Aorta (tissue), 5 donors: ENCODE measurements at regions of chr6 and their contacts with region 1.

Region 1: DNA sequence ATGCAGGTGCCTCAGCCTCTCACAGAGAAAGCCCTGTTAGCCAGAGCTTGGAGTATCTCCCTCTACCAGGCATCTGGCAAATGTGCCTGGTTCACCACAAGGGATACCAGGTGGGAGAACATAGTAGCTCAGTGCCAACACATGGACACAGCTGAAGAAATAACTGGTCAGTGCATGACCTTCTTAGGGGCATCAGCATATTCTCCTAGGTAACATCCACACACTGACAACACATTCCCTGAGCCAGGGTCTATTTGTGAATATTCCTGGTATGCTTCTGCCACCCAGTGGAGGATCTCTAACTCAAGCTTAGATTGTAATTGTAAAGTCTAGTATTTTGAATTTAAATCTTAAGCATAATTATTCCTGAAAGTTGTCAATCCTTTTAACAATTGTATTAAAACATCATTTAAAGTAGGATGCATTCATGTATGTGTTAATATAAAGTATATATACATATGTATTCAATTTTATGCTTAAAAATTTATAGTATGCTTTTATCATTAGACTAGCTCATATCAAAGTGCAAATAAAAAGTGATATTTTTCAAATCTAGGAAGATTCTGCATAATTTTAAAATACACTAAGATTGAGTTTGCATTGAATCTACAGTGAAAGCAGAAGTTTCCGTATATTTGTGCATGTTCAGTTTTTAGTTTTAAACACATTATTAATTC is 45.3 kb upstream of the COL21A1 start:
- DNase-seq: no peak
- ATAC-seq: peak; percentile 75
- H3K4me3 ChIP-seq: no peak overlapping the region
- H3K27ac ChIP-seq: no peak overlapping the region
- H3K4me1 ChIP-seq: no peaks in the 10 kb centered on the region
- H3K27me3 ChIP-seq: no peaks in the 10 kb centered on the region

Region 2: DNA sequence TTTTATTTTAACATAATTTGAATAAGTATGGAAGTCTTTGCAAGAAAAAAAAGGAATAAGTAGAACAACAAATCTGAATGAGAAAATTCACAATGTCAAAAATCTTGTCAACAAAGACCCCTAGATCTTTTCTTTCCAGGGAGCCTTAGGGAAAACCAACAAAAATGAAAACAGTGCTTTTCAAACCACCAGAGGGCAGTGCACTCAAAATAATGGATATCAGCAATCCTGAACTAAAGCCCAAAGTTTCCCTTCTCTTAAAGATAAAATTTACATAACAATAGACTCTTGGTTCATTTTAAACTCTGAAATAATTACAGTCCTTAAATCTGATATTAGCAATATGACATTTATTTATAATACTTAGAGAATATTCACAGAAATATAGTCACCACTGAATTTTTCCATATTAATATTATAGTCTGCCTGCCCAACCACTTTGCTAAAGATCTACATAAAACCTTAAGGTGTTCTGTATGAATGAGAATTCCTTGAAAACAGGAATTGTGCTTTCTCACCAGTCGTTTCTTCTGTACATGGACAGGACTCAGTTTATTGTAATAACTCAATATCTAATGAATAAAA is 311.9 kb before region 1 on chr6:
- intact Hi-C with region 1: loop called (anchors 2 kb)
- DNase-seq: no peak
- ATAC-seq: peak; percentile 56
- H3K4me3 ChIP-seq: no peak overlapping the region
- H3K27ac ChIP-seq: no peak overlapping the region
- H3K4me1 ChIP-seq: no peaks in the 10 kb centered on the region
- H3K27me3 ChIP-seq: no peaks in the 10 kb centered on the region

Region 3: GRCh38 chr6:56025795-56026194 is 266.8 kb before region 1 on chr6:
- intact Hi-C with region 1: loop called in 1 of 2 experiments (anchors 5 kb)
- DNase-seq: no peak
- ATAC-seq: no peak
- H3K4me3 ChIP-seq: no peak overlapping the region
- H3K27ac ChIP-seq: no peak overlapping the region
- H3K4me1 ChIP-seq: peaks cover 0 to 2% of the 10 kb centered on the region in 2 donors
- H3K27me3 ChIP-seq: no peaks in the 10 kb centered on the region

Region 4: DNA sequence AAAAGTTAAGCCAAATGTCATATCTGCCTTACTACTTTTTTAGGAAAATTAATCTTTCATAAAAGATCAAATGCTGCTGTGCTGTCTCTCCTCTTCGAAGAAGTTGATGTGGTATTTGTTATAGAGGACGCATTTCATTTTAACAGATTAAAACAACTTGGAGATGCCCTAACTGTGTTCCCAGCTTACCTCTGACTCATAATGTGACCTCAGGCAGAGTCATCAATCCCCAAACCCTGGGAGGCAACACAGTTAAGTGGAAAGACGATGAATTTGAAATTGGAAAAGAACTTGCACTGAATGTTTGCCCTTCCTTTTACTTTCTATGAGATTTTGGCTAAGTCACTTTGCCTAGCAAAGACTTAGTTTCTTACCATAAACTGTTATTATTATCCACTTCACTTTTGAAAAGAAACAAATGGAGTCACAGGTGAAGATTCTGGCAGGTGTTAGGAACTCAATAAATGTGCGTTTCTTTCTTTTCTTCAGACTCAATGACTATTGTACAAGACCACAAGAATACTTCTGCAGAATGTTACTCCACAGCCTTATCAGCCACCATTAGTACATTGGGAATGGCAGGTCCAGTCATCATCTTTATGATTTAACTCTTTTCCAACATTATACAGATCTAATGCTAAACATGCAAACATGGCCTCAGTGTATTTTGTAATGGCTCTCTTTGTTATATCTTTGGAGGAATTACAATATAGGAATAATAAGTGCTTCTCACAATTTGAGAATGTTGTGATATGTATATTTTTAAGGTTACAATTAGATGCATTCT is 147.9 kb before region 1 on chr6:
- intact Hi-C with region 1: no loop called
- DNase-seq: no peak
- ATAC-seq: no peak
- H3K4me3 ChIP-seq: no peak overlapping the region
- H3K27ac ChIP-seq: no peak overlapping the region
- H3K4me1 ChIP-seq: peaks cover 0 to 6% of the 10 kb centered on the region in 2 donors
- H3K27me3 ChIP-seq: no peaks in the 10 kb centered on the region

Region 5: DNA sequence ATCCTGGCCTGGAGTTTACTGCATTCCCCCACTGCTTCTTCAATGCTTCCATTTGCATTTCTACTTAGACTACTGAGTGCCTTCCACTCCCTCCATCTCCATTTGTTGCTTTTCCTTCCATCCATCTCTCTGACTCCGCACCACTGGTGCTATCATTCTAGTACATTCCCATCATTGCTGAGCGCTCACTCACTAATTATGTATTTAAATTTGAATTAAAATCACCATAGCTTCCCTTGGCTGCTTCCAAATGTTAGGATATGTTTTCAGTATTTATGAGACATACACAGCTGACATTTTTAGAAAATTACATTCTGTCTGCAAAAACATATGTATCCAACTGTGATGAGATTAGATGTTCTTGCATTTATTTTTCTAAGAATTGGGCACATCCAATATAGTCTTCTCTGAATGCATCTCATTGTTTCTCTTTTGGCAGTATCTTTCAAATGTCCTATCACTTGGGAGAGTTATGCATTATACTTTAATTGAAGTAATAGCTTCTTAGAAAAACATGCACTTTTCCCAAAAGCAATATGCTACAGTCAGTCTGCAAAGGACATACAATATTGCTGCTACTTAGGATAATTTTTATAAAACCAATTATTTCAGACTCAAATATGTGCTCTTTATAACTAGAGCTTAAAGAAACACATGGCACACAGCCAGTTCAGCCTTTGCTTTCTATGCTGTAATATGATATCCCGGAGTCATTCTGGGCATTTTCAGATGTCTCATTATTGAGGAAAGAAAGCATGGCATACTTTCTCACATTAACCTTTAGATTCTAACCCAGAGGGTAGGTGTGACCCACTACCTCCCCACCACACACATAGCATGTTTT is 33.2 kb before region 1 on chr6:
- intact Hi-C with region 1: no loop called
- DNase-seq: no peak
- ATAC-seq: no peak
- H3K4me3 ChIP-seq: no peak overlapping the region
- H3K27ac ChIP-seq: no peak overlapping the region
- H3K4me1 ChIP-seq: peaks cover 3 to 9% of the 10 kb centered on the region in 2 donors
- H3K27me3 ChIP-seq: no peaks in the 10 kb centered on the region

Region 6: GRCh38 chr6:56387621-56388394 is 95.2 kb after region 1 on chr6:
- intact Hi-C with region 1: no loop called
- DNase-seq: peak in 1 of 2 donors; percentile 50
- ATAC-seq: peak; percentile 68
- H3K4me3 ChIP-seq: no peak overlapping the region
- H3K27ac ChIP-seq: peak overlapping the region in 1 of 2 donors; percentile 67
- H3K4me1 ChIP-seq: peaks cover 0 to 8% of the 10 kb centered on the region in 2 donors
- H3K27me3 ChIP-seq: no peaks in the 10 kb centered on the region

Region 7: GRCh38 chr6:56524891-56525703 is 232.5 kb after region 1 on chr6:
- intact Hi-C with region 1: no loop called
- DNase-seq: no peak
- ATAC-seq: peak; percentile 91
- H3K4me3 ChIP-seq: no peak overlapping the region
- H3K27ac ChIP-seq: peak overlapping the region; percentile 57 to 96
- H3K4me1 ChIP-seq: peaks cover 0 to 5% of the 10 kb centered on the region in 2 donors
- H3K27me3 ChIP-seq: no peaks in the 10 kb centered on the region